Dendritic cell treated with granulocyte-macrophage colony-stimulating factor and Interleukin-4, amounts not matched to agents 40 ng/mL and 50 ng/mL, for 4 days (primary cell): ENCODE measurements at regions of chr2 and their contacts with region 1.

Region 1: GRCh38 chr2:206693399-206694137 is 24.6 kb downstream of the DYTN start:
- H3K4me3 Mint-ChIP-seq: no peak overlapping the region
- H3K27ac Mint-ChIP-seq: no peak overlapping the region
- H3K4me1 Mint-ChIP-seq: no peaks in the 10 kb centered on the region
- H3K27me3 Mint-ChIP-seq: peaks cover 2% of the 10 kb centered on the region

Region 2: GRCh38 chr2:206736935-206737334 is 43.4 kb after region 1 on chr2:
- intact Hi-C with region 1: no loop called
- H3K4me3 Mint-ChIP-seq: no peak overlapping the region
- H3K27ac Mint-ChIP-seq: no peak overlapping the region
- H3K4me1 Mint-ChIP-seq: no peaks in the 10 kb centered on the region
- H3K27me3 Mint-ChIP-seq: peaks cover 2% of the 10 kb centered on the region

Region 3: GRCh38 chr2:206780671-206781070 is 87.1 kb after region 1 on chr2:
- intact Hi-C with region 1: loop called (anchors 1 kb)
- H3K4me3 Mint-ChIP-seq: no peak overlapping the region
- H3K27ac Mint-ChIP-seq: no peak overlapping the region
- H3K4me1 Mint-ChIP-seq: no peaks in the 10 kb centered on the region
- H3K27me3 Mint-ChIP-seq: no peaks in the 10 kb centered on the region

Region 4: DNA sequence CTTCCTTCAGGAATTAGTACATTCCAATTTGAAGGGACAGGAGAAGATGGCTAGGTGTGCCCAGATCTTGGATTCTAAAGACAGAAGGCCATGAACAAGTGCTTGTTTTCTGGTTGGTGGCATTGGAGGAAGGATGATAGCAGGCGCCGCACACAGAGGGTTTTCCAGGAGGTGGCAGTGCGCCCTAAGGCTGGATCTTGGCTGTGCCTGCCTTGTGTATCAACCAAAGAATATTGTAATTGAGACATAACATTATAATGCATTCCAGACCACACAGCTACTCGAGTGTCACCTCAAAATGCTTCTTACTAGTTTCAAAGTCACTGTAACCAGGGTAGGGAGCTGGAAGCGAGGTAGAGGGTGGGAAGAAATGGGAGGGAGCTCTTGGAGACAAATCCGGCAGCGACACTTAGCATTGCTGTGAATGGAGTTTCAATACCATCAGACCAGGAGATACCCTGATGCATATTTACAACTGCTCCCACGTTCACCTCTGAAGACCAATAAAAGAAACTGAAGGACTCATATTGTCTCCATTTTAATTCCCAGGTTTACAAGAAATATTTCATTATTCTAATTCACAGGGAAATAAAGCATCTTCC is 288.3 kb after region 1 on chr2:
- intact Hi-C with region 1: loop called (anchors 5 kb)
- H3K4me3 Mint-ChIP-seq: no peak overlapping the region
- H3K27ac Mint-ChIP-seq: no peak overlapping the region
- H3K4me1 Mint-ChIP-seq: peaks cover 23% of the 10 kb centered on the region
- H3K27me3 Mint-ChIP-seq: no peaks in the 10 kb centered on the region